Ascending aorta (tissue), 2 donors: ENCODE measurements at regions of chr11 and their contacts with region 1.

Region 1: GRCh38 chr11:46889689-46890475 is 28.5 kb downstream of the LRP4 start:
- DNase-seq: peak in 1 of 2 donors; percentile 84
- H3K4me3 ChIP-seq: no peak overlapping the region
- H3K27ac ChIP-seq: no peak overlapping the region
- H3K4me1 ChIP-seq: no peaks in the 10 kb centered on the region
- H3K27me3 ChIP-seq: no peaks in the 10 kb centered on the region
- CTCF ChIP-seq: peak; percentile 82 to 88 (median 86)

Region 2: GRCh38 chr11:47152953-47153950 is 263.4 kb after region 1 on chr11:
- intact Hi-C with region 1: loop called (anchors 1 kb)
- DNase-seq: peak in 1 of 2 donors; percentile 85
- H3K4me3 ChIP-seq: no peak overlapping the region
- H3K27ac ChIP-seq: no peak overlapping the region
- H3K4me1 ChIP-seq: no peaks in the 10 kb centered on the region
- H3K27me3 ChIP-seq: no peaks in the 10 kb centered on the region
- CTCF ChIP-seq: peak; percentile 89 to 95 (median 90)